ENCODE measurements at regions of chr1 and their contacts with region 1.

Region 1: GRCh38 chr1:67500413-67500959 is 70.3 kb upstream of the SERBP1 start:
- DNase-seq: peak; percentile 92
- H3K4me3 Mint-ChIP-seq: no peak overlapping the region
- H3K27ac Mint-ChIP-seq: no peak overlapping the region
- H3K4me1 Mint-ChIP-seq: no peaks in the 10 kb centered on the region
- H3K27me3 Mint-ChIP-seq: no peaks in the 10 kb centered on the region
- CTCF ChIP-seq: peak; percentile 95

Region 2: GRCh38 chr1:67214420-67215174 is 285.9 kb before region 1 on chr1:
- CTCF ChIA-PET with region 1: interaction called, 117 read pairs
- POLR2A ChIA-PET with region 1: interaction called, 5 read pairs
- intact Hi-C with region 1: loop called (anchors 1 kb)
- DNase-seq: peak; percentile 48
- H3K4me3 Mint-ChIP-seq: no peak overlapping the region
- H3K27ac Mint-ChIP-seq: no peak overlapping the region
- H3K4me1 Mint-ChIP-seq: no peaks in the 10 kb centered on the region
- H3K27me3 Mint-ChIP-seq: no peaks in the 10 kb centered on the region
- CTCF ChIP-seq: peak; percentile 66

Region 3: DNA sequence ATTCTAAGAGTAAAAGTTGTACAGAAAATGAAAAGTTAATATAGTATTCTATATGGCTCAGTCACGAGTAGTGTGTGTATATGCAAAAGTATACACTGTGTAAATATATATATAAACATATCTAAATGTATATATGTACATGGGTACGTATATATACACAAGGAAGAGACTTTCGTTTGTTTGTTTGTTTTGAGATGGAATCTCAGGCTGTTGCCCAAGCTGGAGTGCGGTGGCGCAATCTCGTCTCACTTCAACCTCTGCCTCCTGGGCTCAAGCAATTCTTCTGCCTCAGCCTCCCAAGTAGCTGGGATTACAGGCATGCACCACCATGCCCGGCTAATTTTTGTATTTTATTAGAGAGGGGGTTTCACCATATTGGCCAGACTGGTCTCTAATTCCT is 176.4 kb before region 1 on chr1:
- CTCF ChIA-PET with region 1: interaction called, 11 read pairs
- POLR2A ChIA-PET with region 1: no interaction called
- intact Hi-C with region 1: no loop called
- DNase-seq: no peak
- H3K4me3 Mint-ChIP-seq: no peak overlapping the region
- H3K27ac Mint-ChIP-seq: no peak overlapping the region
- H3K4me1 Mint-ChIP-seq: no peaks in the 10 kb centered on the region
- H3K27me3 Mint-ChIP-seq: no peaks in the 10 kb centered on the region
- CTCF ChIP-seq: no peak

Region 4: DNA sequence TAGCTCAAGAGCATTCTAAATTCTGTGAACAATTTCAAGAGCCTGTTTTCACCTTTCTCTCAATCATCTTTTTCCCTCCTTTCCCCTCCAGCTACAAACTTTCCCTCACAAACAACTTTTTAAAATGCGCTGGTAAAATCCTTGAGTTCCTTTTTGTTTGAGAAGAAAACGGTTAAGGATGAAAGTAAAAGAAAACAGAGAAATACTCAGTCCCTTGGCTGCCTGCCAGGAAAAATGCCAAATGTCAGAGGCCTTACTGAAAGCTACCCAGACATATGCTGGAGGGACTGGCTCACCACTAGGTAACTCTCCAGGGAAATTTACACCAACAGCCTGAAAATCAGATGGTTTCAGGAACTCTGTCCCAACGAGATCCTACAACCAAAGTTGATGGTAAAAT is 59.3 kb before region 1 on chr1:
- CTCF ChIA-PET with region 1: interaction called, 12 read pairs
- POLR2A ChIA-PET with region 1: no interaction called
- intact Hi-C with region 1: no loop called
- DNase-seq: peak; percentile 64
- H3K4me3 Mint-ChIP-seq: no peak overlapping the region
- H3K27ac Mint-ChIP-seq: peak overlapping the region; percentile 7
- H3K4me1 Mint-ChIP-seq: peaks cover 13% of the 10 kb centered on the region
- H3K27me3 Mint-ChIP-seq: no peaks in the 10 kb centered on the region
- CTCF ChIP-seq: no peak

Region 5: DNA sequence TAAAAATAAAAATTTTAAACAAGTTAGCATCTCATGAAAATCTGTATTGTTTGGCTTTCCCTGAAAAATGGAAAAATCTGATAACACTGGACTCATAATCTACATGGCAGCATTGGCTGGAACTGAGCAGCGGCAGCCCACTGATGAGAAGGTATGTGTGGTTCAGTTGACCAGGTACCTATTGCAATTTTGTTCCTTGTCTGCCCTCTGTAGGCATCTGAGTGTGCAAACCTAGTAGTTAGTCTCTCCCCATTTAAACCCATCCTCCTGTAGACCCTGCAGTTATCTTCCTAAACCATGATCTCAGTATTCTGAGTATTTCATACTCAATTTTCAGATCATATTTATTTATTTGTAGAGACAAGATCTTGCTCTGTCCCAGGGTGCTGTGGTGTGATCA is 10.8 kb before region 1 on chr1:
- CTCF ChIA-PET with region 1: interaction called, 37 read pairs
- POLR2A ChIA-PET with region 1: no interaction called
- intact Hi-C with region 1: no loop called
- DNase-seq: peak; percentile 38
- H3K4me3 Mint-ChIP-seq: no peak overlapping the region
- H3K27ac Mint-ChIP-seq: no peak overlapping the region
- H3K4me1 Mint-ChIP-seq: no peaks in the 10 kb centered on the region
- H3K27me3 Mint-ChIP-seq: no peaks in the 10 kb centered on the region
- CTCF ChIP-seq: no peak

Region 6: DNA sequence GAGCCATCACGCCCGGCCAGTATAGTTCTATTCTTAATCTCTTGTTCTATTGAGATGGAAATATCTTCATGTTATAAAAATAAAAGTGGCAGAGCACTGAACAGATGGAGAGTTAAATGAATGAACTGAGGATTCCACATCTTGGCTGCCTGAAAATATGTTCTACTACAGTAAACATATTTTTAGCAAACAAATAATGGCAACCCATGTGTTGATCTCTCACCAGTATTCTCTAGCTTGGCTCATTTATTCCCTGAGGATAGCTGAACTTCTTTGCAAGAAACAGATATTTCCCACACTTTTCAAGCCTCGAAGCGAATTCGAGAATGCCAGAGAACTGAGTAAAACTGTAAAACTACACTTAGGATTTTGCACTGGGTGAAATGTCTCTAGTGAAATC is 491.1 kb after region 1 on chr1:
- CTCF ChIA-PET with region 1: no interaction called
- POLR2A ChIA-PET with region 1: no interaction called
- intact Hi-C with region 1: no loop called
- DNase-seq: no peak
- H3K4me3 Mint-ChIP-seq: no peak overlapping the region
- H3K27ac Mint-ChIP-seq: no peak overlapping the region
- H3K4me1 Mint-ChIP-seq: peaks cover 9% of the 10 kb centered on the region
- H3K27me3 Mint-ChIP-seq: no peaks in the 10 kb centered on the region
- CTCF ChIP-seq: no peak

Measured in MCF 10A (cell line).